ENCODE measurements at regions of chr4 and their contacts with region 1.

Region 1: GRCh38 chr4:185656467-185656931 is 121.2 kb upstream of the PDLIM3 start:
- DNase-seq: peak; percentile 37 to 47
- ATAC-seq: peak; percentile 59 to 81 (median 71)
- H3K4me3 ChIP-seq: peak overlapping the region in 8 of 10 donors; percentile 12 to 51 (median 34)
- H3K27ac ChIP-seq: peak overlapping the region in 9 of 10 donors; percentile 56 to 83 (median 68)
- H3K4me1 ChIP-seq: peaks cover 4 to 81% (median 40%) of the 10 kb centered on the region in 9 donors
- H3K27me3 ChIP-seq: no peaks in the 10 kb centered on the region
- CTCF ChIP-seq: peak in 6 of 9 donors; percentile 36 to 55 (median 53)

Region 2: DNA sequence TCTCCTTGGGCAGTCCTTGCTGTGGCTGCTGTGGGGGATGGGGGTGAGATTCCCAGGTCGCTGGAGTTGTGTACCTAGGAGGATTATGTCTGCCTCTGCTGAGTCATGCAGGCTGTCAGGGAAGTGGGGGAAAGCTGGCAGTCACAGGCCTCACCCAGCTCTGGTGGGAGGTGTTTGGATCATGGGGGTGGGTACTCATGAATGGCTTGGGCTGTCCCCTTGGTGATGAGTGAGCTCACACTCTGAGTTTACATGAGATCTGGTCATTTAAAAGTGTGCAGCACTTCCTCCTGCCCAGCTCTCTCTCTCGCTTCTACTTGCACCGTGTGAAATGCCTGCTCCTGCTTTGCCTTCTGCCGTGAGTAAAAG is 96.6 kb before region 1 on chr4:
- intact Hi-C with region 1: no loop called
- DNase-seq: no peak
- ATAC-seq: peak in 6 of 8 donors; percentile 41 to 81 (median 59)
- H3K4me3 ChIP-seq: no peak overlapping the region
- H3K27ac ChIP-seq: peak overlapping the region in 4 of 10 donors; percentile 22 to 53 (median 38)
- H3K4me1 ChIP-seq: peaks cover 0 to 13% (median 4%) of the 10 kb centered on the region in 9 donors
- H3K27me3 ChIP-seq: no peaks in the 10 kb centered on the region
- CTCF ChIP-seq: no peak

Region 3: GRCh38 chr4:185726931-185727330 is 70.4 kb after region 1 on chr4:
- intact Hi-C with region 1: loop called in 1 of 10 experiments (anchors 5 kb)
- DNase-seq: no peak
- ATAC-seq: peak in 2 of 8 donors; percentile 18 to 40
- H3K4me3 ChIP-seq: no peak overlapping the region
- H3K27ac ChIP-seq: peak overlapping the region in 2 of 10 donors; percentile 2 to 5
- H3K4me1 ChIP-seq: peaks cover 0 to 91% (median 56%) of the 10 kb centered on the region in 9 donors
- H3K27me3 ChIP-seq: no peaks in the 10 kb centered on the region
- CTCF ChIP-seq: no peak

Region 4: DNA sequence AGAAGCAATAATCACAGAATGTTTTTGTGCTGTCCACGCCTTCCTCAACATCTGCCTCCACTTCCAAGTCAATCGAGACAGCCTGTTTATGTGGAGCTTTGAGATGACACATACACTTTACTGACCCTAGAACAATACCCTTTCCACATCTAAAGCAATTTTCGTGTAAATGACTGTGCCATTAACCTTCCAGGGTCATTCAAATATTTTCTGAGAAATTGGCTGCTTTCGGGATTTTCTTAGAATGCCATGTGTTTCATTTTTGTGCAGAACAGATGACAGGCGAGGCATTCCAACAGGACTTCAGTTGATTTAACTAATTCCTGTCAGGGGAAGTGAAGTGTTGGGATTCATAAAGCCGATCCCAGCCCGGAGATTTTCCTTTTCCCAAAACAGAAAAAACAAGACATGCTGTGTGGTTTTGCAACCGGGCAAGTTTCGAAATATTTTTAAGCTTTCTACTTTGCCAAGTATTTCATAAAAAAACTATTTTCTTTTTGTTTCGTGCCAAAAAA is 81.6 kb after region 1 on chr4:
- intact Hi-C with region 1: loop called in 1 of 10 experiments (anchors 5 kb)
- DNase-seq: no peak
- ATAC-seq: peak in 3 of 8 donors; percentile 4 to 47 (median 34)
- H3K4me3 ChIP-seq: peak overlapping the region in 6 of 10 donors; percentile 0 to 36 (median 24)
- H3K27ac ChIP-seq: peak overlapping the region in 9 of 10 donors; percentile 10 to 76 (median 57)
- H3K4me1 ChIP-seq: peaks cover 15 to 96% (median 72%) of the 10 kb centered on the region in 9 donors
- H3K27me3 ChIP-seq: no peaks in the 10 kb centered on the region
- CTCF ChIP-seq: no peak

Region 5: DNA sequence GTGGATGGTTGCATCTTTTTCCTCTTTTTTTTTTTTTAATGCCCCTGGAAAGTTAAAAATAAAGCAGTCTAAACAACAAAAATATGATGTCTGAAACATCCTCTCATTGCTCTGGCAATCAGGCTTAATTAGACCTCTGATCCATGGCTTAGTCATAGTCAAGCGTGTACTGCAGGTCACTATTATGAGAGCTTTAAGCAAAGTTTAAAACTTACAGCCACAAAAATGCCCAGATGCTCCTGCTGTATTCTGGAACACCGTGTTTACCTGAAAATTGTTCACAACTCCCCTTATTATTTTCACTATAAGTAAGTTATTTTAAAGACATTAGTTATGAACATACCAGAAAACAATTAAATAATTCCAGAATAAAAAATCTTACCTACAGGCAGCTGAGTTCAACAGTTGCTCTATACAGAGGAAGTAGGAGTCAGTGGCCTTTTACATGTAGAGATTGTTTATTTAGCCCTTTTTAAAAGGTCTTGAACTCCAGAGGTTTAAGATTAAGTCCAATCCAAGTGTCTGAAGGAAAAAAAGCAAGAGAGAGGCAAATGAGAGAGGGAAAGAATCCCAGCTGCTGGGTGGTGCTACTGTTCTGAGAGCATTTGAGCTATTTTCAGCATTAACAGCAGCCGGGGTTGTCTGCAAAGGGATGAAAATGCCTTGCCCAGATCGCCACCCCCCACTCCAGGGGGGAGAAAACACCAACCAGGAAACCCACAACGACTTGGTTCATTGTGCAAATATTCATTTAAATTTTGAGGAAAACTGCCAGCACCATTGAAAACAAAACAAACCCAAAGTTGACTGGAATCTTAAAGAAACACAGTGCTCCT is 118.6 kb after region 1 on chr4:
- intact Hi-C with region 1: loop called in 2 of 10 experiments (anchors 10 kb)
- DNase-seq: peak in 1 of 2 donors; percentile 48
- ATAC-seq: peak in 5 of 8 donors; percentile 27 to 60 (median 41)
- H3K4me3 ChIP-seq: peak overlapping the region; percentile 1 to 50 (median 44)
- H3K27ac ChIP-seq: peak overlapping the region; percentile 65 to 93 (median 80)
- H3K4me1 ChIP-seq: peaks cover 0 to 89% (median 44%) of the 10 kb centered on the region in 9 donors
- H3K27me3 ChIP-seq: no peaks in the 10 kb centered on the region
- CTCF ChIP-seq: peak in 1 of 9 donors; percentile 14